ENCODE measurements at regions of chr19 and their contacts with region 1.

Region 1: DNA sequence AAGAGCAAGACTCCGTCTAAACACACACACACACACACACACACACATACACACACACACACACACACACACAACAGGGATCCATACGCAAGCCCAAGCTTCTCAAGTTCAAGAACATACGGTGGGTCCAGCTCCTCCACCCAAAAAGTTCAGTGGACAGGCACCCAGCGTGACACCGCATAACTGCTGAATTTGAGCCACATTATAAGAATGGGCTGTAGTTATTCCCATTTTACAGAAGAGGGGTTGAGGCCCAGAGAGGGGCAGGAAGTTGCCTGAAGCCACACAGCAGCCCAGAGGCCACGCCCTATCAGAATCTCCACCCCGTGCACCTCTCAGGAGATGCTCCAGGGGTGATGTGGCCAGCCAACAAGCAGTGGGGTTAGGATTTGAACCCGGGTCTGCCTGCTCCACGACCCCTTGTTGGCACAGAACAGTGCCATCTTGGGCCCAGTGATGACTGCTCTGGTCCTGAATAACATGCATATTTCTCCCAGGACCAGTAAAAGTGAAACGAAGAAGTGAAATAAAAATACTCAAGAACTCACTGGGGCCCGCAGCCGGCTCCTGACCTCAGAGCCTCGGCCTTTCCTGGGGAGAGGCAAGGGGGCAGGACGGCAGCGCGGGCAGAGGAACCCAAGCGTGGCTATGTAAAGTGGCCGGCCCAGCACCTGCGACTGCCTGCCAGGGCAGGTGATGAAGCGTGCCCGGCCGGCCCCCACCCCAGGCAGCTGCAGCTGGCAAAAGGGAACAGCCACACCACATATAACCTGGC is 61.9 kb downstream of the AP1M1 start:
- DNase-seq: peak; percentile 96
- H3K4me3 ChIP-seq: peak overlapping the region; percentile 45
- H3K27ac ChIP-seq: peak overlapping the region; percentile 91
- H3K4me1 ChIP-seq: peaks cover 81% of the 10 kb centered on the region
- CTCF ChIP-seq: peak; percentile 19; the same call in 1 of the 2 replicates

Region 2: DNA sequence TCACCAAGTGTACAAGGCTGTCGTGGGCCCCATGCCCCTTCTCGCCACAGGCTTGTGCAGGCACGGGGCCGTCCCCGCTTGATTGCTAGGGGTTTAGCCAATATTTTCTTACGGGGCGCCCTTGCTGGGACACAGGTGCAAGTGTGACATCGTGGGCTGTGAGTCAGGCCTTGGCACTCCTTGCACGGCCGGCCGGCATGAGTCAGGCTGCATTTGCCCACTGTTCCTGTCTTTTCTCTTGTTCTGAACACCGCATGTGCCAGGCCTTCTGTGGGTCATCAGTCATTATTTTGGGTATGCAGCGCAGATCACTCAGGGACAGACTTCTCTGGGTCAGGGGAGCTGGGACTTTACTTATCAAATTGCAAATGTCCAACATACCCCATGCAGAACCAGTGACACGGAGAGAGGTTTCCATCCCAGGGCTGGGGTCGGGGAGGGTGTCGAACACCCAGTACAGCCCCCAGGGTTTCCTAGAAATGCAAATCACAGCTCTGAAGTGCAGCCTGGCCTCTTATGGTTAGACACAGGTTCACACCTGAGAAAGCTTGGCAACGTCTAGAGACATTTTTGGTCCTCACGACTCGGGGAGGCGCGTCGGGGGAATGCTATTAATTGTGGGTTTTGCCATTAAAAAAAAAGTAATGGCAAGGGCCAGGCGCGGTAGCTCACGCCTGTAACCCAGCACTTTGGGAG is 42.6 kb after region 1 on chr19:
- CTCF ChIA-PET with region 1: no interaction called
- POLR2A ChIA-PET with region 1: interaction called, 3 read pairs
- intact Hi-C with region 1: loop called (anchors 1 kb)
- DNase-seq: peak; percentile 90
- H3K4me3 ChIP-seq: peak overlapping the region; percentile 35
- H3K27ac ChIP-seq: peak overlapping the region; percentile 93
- H3K4me1 ChIP-seq: peaks cover 64% of the 10 kb centered on the region
- CTCF ChIP-seq: no peak

Region 3: DNA sequence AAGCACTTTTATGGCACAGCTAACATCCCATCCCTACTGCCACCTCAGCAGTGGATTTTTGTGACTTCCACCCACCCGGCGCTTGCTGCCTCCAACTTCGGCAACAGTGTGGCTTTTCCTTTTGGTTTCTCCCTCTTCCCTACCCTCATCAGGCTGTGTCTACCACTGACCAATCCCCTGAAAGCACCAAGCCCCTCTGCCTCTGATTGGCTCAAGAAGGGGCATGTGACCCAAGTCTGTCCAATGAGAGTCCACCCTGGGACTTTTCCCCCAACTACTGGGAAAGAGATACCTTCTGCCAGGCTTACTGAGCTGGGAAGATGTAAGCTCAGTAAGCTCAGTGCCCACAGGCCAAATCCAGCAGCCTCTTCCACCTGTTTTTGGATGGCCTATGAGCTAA is 394.6 kb after region 1 on chr19:
- CTCF ChIA-PET with region 1: no interaction called
- POLR2A ChIA-PET with region 1: no interaction called
- intact Hi-C with region 1: no loop called
- DNase-seq: no peak
- H3K4me3 ChIP-seq: no peak overlapping the region
- H3K27ac ChIP-seq: no peak overlapping the region
- H3K4me1 ChIP-seq: peaks cover 11% of the 10 kb centered on the region
- CTCF ChIP-seq: no peak